ENCODE measurements at regions of chr3 and their contacts with region 1.

Region 1: GRCh38 chr3:52798978-52799476 is 4.4 kb downstream of the ITIH3 start:
- DNase-seq: peak; percentile 41
- ATAC-seq: peak; percentile 45
- H3K4me3 ChIP-seq: no peak overlapping the region
- H3K27ac ChIP-seq: no peak overlapping the region
- H3K4me1 ChIP-seq: peaks cover 51% of the 10 kb centered on the region
- H3K27me3 ChIP-seq: no peaks in the 10 kb centered on the region
- CTCF ChIP-seq: peak; percentile 74
- EP300 ChIP-seq: no peak
- POLR2A ChIP-seq: no peak
- RAD21 ChIP-seq: peak; percentile 55; the same call in 1 of the 2 replicates

Region 2: DNA sequence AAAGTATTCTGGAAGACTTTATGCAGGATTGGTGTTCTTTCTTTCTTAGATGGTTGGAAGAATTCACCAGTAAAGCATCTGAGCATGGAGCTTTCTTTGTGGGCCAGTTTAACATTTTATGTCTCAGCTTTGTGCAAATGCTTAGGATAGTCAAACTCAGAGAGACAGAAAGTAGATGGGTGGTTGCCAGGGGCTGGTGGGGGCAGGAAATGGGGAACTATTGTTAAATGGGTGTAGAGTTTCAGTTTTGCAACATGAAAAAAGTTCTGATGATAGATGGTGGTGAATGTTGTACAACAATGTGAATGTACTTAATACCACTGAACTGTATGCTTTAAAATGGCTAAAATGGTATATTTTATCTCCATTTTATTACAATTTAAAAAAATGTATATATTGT is 68.3 kb before region 1 on chr3:
- CTCF ChIA-PET with region 1: no interaction called
- POLR2A ChIA-PET with region 1: no interaction called
- in situ Hi-C with region 1: no loop called
- intact Hi-C with region 1: no loop called
- DNase-seq: no peak
- ATAC-seq: no peak
- H3K4me3 ChIP-seq: no peak overlapping the region
- H3K27ac ChIP-seq: no peak overlapping the region
- H3K4me1 ChIP-seq: no peaks in the 10 kb centered on the region
- H3K27me3 ChIP-seq: no peaks in the 10 kb centered on the region
- CTCF ChIP-seq: no peak
- EP300 ChIP-seq: no peak
- POLR2A ChIP-seq: no peak
- RAD21 ChIP-seq: no peak

Region 3: GRCh38 chr3:52809662-52810377 is 10.8 kb after region 1 on chr3:
- CTCF ChIA-PET with region 1: no interaction called
- POLR2A ChIA-PET with region 1: interaction called, 70 read pairs
- in situ Hi-C with region 1: no loop called
- intact Hi-C with region 1: no loop called
- DNase-seq: no peak
- ATAC-seq: no peak
- H3K4me3 ChIP-seq: no peak overlapping the region
- H3K27ac ChIP-seq: no peak overlapping the region
- H3K4me1 ChIP-seq: peaks cover 61% of the 10 kb centered on the region
- H3K27me3 ChIP-seq: no peaks in the 10 kb centered on the region
- CTCF ChIP-seq: no peak
- EP300 ChIP-seq: no peak
- POLR2A ChIP-seq: peak in 1 of 2 experiments; percentile 54; a peak in 2 of 4 replicates
- RAD21 ChIP-seq: no peak